Activated CD4-positive, alpha-beta T cell treated with anti-CD3 and anti-CD28 coated beads, Interleukin-2, amount 10 ng/mL, durations not matched to agents 24 days and 14 days (primary cell): ENCODE measurements at regions of chr11 and their contacts with region 1.

Region 1: GRCh38 chr11:111982019-111982464 is 43.2 kb upstream of the DLAT start:
- DNase-seq: peak; percentile 85
- H3K4me3 Mint-ChIP-seq: no peak overlapping the region
- H3K27ac Mint-ChIP-seq: no peak overlapping the region
- H3K4me1 Mint-ChIP-seq: peaks cover 7% of the 10 kb centered on the region
- H3K27me3 Mint-ChIP-seq: peaks cover 3% of the 10 kb centered on the region

Region 2: DNA sequence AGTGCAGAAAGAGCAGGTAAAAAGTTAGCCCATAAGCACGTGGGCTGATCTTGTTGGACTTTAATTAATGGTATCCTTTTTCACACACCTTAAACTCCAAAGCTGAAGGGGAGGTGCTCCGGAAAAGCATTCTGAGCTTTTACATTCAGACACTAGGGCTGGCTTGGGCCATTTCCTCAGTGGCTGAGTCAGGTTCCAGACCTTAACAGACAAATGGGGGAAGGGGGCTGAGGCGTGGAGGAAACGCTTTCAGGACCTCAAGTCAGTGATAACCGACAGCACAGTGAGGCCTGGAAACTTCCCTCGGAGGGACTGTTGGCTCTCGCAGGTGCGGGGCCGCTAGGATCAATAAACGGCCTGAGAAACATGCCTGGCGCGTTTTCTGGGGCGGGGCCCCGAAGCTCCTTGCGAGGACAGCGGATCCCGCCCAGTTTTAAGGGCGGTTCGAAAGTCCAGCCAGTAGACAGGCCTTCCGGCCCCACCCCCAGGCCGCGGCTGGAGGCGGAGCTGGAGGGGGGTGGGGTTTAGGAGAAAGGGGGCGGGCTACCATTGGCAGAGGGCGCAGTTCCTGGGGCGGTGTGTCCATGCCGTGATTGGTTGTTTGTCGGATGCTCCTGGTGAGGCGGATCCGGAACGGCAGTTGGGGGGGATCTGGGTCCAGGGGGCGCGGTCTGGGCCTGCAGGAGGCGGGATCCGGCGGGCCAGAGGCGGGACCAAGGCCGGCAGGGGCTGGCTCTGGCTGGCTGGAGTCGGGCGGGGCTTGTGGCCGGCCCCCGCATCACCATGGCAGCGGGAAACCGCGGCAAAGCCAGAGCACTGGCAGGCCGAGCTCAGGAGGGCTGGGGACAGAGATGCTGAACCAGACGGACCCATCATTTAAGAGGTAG is 55.3 kb before region 1 on chr11:
- intact Hi-C with region 1: no loop called
- DNase-seq: peak; percentile 99
- H3K4me3 Mint-ChIP-seq: peak overlapping the region; percentile 91
- H3K27ac Mint-ChIP-seq: peak overlapping the region; percentile 89
- H3K4me1 Mint-ChIP-seq: peaks cover 13% of the 10 kb centered on the region
- H3K27me3 Mint-ChIP-seq: peaks cover 7% of the 10 kb centered on the region

Region 3: DNA sequence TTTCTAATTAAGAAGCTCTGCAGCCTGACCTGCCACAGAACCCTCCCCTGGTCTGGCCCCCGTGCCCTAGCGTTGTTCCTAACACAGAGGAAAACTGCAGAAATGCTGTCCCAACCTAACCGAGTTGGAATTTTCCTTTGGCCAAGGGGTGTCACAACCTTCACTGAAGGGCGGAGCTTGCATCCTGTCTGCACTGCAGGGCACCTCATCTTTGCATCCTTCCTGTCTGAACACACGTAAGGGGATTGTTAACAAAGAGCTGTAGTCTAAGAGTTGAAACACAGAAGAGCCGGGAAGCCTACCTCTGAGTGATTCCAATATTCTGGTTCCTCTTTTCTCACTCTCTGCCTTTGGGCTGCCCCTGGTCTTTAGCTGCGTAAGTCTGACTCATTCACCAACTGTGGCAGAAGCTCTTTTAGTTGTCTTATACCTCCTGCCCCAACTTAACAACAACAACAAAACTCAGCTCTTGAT is 43.3 kb before region 1 on chr11:
- intact Hi-C with region 1: loop called (anchors 2 kb)
- DNase-seq: peak; percentile 81
- H3K4me3 Mint-ChIP-seq: peak overlapping the region; percentile 91
- H3K27ac Mint-ChIP-seq: peak overlapping the region; percentile 95
- H3K4me1 Mint-ChIP-seq: peaks cover 50% of the 10 kb centered on the region
- H3K27me3 Mint-ChIP-seq: no peaks in the 10 kb centered on the region